MCF 10A (cell line): ENCODE measurements at regions of chr7 and their contacts with region 1.

Region 1: DNA sequence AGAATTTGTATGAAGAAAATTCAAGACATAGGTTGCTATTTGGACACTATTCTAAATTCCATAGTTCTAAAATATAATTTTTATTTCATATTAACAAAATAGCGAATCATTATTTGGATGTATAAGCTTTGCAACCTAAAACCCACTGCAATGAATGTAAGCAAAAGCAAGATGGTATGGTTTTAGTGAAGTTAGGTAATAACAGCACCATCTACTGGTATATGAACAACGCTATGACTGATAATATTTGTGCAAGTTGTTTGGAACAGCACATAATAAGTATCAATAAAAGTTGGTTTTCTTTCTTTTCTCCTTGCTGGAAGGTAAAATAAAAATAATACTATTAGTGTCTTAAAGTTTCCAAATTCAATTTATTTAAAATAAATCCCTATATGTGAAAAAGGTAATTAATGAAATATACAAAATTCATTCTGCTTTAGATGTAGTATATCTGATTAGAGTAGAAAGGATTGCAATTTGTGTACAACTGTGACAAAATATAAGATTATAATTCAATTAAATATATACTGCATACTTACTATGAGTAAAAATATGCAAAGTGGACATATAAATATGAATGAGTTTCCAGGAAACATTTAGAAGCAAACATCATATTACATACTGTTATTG is 79.0 kb upstream of the LSM8 start:
- DNase-seq: peak; percentile 44
- H3K4me3 Mint-ChIP-seq: no peak overlapping the region
- H3K27ac Mint-ChIP-seq: no peak overlapping the region
- H3K4me1 Mint-ChIP-seq: no peaks in the 10 kb centered on the region
- H3K27me3 Mint-ChIP-seq: no peaks in the 10 kb centered on the region
- CTCF ChIP-seq: peak; percentile 67

Region 2: GRCh38 chr7:117873310-117874190 is 231.4 kb before region 1 on chr7 and contains the start of gene CTTNBP2:
- CTCF ChIA-PET with region 1: interaction called, 3 read pairs
- POLR2A ChIA-PET with region 1: no interaction called
- intact Hi-C with region 1: loop called (anchors 1 kb)
- DNase-seq: peak; percentile 48
- H3K4me3 Mint-ChIP-seq: peak within 1 kb of the TSS; percentile 73
- H3K27ac Mint-ChIP-seq: no peak within 1 kb of the TSS
- H3K4me1 Mint-ChIP-seq: peaks cover 6% of the 10 kb centered on the region
- H3K27me3 Mint-ChIP-seq: peaks cover 33% of the 10 kb centered on the region
- CTCF ChIP-seq: no peak
- total RNA-seq, gene CTTNBP2: 0.17 and 0.98 TPM in 2 replicates

Region 3: GRCh38 chr7:117951696-117952280 is 153.1 kb before region 1 on chr7:
- CTCF ChIA-PET with region 1: interaction called, 3 read pairs
- POLR2A ChIA-PET with region 1: no interaction called
- intact Hi-C with region 1: loop called (anchors 2 kb)
- DNase-seq: peak; percentile 38
- H3K4me3 Mint-ChIP-seq: no peak overlapping the region
- H3K27ac Mint-ChIP-seq: peak overlapping the region; percentile 14
- H3K4me1 Mint-ChIP-seq: peaks cover 31% of the 10 kb centered on the region
- H3K27me3 Mint-ChIP-seq: no peaks in the 10 kb centered on the region
- CTCF ChIP-seq: no peak

Region 4: DNA sequence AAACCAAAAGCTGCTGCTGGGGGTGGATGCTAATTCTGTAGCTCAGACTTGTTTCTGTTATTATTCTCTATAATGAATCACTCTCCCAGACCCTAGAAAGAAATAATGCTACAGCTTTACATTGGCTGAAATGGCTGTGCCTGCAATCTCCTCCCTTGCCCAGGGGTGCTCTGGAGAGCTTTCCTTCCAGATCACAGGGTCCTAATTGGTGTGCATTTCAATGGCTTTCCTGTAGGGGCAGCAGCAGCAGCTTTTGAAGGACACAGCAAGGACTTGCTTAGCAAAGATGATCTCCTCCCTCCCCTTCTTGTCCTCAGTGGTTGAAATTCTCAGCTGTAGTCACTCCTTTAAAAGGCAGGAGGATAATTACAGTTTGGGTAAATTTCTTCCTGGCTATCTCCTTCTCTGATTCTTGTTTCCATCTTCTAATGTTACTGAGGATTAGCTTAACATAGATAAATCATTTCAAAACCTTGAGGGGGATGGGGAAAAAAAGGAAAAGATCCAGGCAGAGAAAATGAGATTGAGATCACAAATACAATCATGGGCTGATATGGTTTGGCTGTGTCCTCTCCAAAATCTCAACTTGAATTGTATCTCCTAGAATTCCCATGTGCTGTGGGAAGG is 111.4 kb before region 1 on chr7:
- CTCF ChIA-PET with region 1: interaction called, 6 read pairs
- POLR2A ChIA-PET with region 1: no interaction called
- intact Hi-C with region 1: loop called (anchors 1 kb)
- DNase-seq: peak; percentile 64
- H3K4me3 Mint-ChIP-seq: no peak overlapping the region
- H3K27ac Mint-ChIP-seq: no peak overlapping the region
- H3K4me1 Mint-ChIP-seq: peaks cover 23% of the 10 kb centered on the region
- H3K27me3 Mint-ChIP-seq: no peaks in the 10 kb centered on the region
- CTCF ChIP-seq: peak; percentile 38

Region 5: GRCh38 chr7:118731854-118732253 is 626.9 kb after region 1 on chr7:
- CTCF ChIA-PET with region 1: no interaction called
- POLR2A ChIA-PET with region 1: no interaction called
- intact Hi-C with region 1: no loop called
- DNase-seq: peak; percentile 3
- H3K4me3 Mint-ChIP-seq: no peak overlapping the region
- H3K27ac Mint-ChIP-seq: no peak overlapping the region
- H3K4me1 Mint-ChIP-seq: no peaks in the 10 kb centered on the region
- H3K27me3 Mint-ChIP-seq: peaks cover 28% of the 10 kb centered on the region
- CTCF ChIP-seq: no peak